A673 (cell line): ENCODE measurements at regions of chr14 and their contacts with region 1.

Region 1: DNA sequence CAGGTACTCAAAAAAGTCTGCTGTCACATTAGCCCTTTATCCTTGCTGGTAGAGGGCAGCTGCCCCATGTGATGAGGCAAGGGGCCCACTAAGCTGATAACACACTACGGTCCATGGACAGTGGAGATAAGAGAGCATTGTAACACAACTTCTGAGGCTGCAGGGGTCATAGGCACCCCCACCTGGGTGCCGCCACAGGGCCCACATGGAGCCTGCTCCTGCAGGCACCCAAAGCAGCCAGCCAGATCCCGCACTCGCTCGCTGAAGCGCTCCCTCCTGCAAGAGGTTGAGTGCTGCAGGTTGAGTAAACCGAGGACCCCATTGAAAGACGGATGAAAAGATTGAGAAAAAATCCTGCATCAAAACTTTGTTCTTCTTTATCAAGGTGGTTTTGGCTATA is 566.3 kb upstream of the NOVA1 start:
- DNase-seq: no peak
- H3K4me3 ChIP-seq: no peak overlapping the region
- H3K27ac ChIP-seq: no peak overlapping the region
- H3K4me1 ChIP-seq: no peaks in the 10 kb centered on the region
- H3K27me3 ChIP-seq: no peaks in the 10 kb centered on the region
- CTCF ChIP-seq: no peak

Region 2: GRCh38 chr14:27205036-27205435 is 40.9 kb after region 1 on chr14:
- CTCF ChIA-PET with region 1: no interaction called
- POLR2A ChIA-PET with region 1: no interaction called
- intact Hi-C with region 1: loop called (anchors 1 kb)
- DNase-seq: no peak
- H3K4me3 ChIP-seq: no peak overlapping the region
- H3K27ac ChIP-seq: no peak overlapping the region
- H3K4me1 ChIP-seq: no peaks in the 10 kb centered on the region
- H3K27me3 ChIP-seq: no peaks in the 10 kb centered on the region
- CTCF ChIP-seq: no peak